Panc1 (cell line): ENCODE measurements at regions of chr3 and their contacts with region 1.

Region 1: DNA sequence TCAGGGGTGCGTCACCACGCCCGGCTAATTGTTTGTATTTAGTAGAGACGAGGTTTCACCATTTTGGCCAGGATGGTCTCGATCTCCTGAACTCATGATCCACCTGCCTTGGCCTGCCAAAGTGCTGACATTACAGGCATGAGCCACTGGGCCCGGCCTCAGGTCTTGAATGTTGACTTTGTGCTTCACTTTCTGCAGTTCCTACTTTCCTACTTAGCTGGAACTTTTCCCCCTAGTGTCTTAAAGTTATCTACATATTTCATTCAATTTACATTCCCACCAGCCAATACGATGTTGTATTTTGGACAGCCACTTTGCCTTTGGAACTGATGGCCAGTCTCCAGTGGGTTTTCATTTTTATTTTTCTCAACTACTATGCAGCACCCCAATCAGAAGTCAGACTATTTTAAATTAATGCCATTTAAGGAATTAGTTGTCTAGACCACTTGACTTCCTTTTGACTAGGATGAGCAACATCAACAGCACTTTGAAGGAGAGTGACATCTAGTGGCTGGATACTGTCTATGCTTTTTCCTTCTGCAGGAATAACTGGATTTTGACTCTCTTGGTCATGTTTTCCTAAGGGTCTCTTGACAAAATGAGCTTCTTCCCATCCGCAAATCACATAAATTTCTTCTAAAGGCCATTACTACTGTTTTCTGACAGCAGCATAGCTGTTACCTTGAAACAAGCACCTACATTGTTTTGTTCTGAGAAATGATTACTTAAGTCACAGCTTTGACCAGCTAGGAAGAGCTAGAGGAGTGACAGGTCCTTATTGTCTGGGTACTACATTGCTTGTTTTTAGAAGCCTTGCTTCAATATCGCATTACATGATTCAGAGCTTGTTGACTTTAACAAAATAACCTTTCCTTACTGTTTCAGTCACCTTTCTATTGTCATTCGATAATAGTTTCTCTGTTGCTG is 140.2 kb downstream of the ITPR1 start:
- DNase-seq: peak; percentile 65
- ATAC-seq: peak; percentile 73; the same call in 1 of the 2 replicates
- H3K4me3 ChIP-seq: no peak overlapping the region
- H3K27ac ChIP-seq: no peak overlapping the region
- H3K4me1 ChIP-seq: no peaks in the 10 kb centered on the region
- H3K27me3 ChIP-seq: no peaks in the 10 kb centered on the region
- CTCF ChIP-seq: peak; percentile 78

Region 2: DNA sequence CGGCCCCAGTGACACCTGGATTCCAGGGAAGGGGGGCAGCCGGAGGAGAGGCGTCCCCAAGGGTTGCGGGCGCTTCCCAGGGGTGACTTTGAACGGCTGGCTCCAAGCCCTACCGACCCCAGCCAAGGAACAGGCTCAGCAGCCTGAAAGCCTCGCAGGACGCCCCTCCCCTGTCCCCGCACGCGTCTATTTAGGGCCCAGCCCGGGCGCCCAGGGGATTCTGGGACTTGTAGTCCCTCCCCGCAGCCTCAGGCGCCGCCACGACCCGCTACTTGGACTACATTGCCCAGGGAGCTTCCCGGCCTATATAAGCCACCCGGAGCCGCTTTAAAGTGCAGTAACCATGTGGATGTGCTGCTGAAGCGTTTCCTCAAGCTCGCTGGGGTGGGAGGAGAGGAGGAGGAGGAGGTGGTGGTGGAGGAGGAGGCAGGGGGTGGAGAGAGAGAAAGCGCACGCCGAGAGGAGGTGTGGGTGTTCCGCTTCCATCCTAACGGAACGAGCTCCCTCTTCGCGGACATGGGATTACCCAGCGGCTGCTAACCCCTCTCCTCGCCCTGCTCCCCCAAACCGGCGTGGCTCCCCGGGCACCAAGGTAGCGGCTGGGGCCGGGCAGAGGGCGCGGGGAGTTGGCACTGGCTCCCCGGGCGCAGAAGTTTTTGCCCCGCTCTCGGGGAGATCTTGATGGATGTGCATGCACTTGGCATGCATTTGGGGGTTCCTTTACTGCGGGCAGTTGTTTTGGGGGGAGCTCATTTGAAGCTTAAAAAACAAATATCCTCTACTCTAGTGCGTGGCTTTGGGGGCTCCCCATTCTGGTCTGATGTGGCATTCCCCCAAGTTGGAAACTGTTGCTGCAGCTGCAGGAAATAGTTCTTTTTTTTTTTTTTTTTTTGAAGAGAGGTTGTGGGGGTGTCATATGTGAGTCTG is 140.1 kb before region 1 on chr3 and contains the start of gene ITPR1:
- CTCF ChIA-PET with region 1: no interaction called
- POLR2A ChIA-PET with region 1: no interaction called
- in situ Hi-C with region 1: no loop called
- intact Hi-C with region 1: loop called (anchors 10 kb)
- DNase-seq: peak; percentile 84
- ATAC-seq: peak; percentile 98
- H3K4me3 ChIP-seq: peak within 1 kb of the TSS; percentile 79 to 90
- H3K27ac ChIP-seq: peak within 1 kb of the TSS; percentile 51
- H3K4me1 ChIP-seq: peaks cover 3% of the 10 kb centered on the region; the same call in 1 of the 2 replicates
- H3K27me3 ChIP-seq: peaks cover 2% of the 10 kb centered on the region; the same call in 1 of the 2 replicates
- CTCF ChIP-seq: no peak
- total RNA-seq, gene ITPR1: 8.7 TPM